Endothelial cell of umbilical vein (primary cell): ENCODE measurements at regions of chr5 and their contacts with region 1.

Region 1: DNA sequence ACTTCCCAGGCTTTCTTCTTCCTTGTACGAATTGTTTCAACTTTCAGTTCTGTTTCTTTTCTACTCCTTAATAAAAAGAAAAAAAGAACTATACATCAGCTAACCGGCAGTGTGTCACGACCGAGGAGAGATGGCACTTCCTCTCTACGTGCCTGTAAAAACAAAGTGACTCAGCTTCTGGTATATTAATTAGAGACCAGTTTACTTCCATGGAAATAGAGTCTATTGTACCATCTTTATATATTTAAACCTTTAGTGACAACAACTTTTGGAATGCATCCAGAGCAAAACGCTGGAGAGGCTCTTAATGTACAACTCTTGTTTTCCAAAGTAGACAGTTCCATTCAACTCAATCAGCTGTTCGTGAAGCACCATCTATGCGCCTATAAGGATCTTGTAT is 94.5 kb upstream of the LIFR start:
- DNase-seq: peak; percentile 92
- H3K4me3 ChIP-seq: peak overlapping the region in 1 of 3 experiments; percentile 28
- H3K27ac ChIP-seq: peak overlapping the region; percentile 44
- H3K4me1 ChIP-seq: peaks cover 12% of the 10 kb centered on the region
- H3K27me3 ChIP-seq: peaks cover 0 to 2% of the 10 kb centered on the region in 2 experiments
- CTCF ChIP-seq: no peak
- POLR2A ChIP-seq: no peak

Region 2: DNA sequence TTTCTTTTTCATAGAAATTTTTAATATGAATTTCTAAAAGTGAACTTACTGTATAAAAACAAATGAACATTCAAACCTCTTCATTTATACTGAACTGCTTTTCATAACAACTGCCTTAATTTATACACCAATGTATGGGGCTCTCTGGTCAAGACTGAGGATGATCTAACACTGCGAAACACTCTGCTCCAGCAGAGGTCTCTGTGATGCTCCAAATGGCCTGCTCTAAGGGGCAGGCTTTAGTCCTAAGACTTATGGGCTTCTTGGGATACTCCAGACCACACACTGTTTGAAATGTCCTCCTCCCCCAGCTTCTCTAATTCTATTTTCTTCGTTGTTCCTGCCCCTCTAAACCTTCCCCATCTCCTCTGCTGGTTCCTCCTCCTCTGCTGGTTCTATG is 153.0 kb before region 1 on chr5:
- CTCF ChIA-PET with region 1: no interaction called
- POLR2A ChIA-PET with region 1: no interaction called
- dilution Hi-C with region 1: no loop called
- intact Hi-C with region 1: no loop called
- DNase-seq: peak; percentile 14
- H3K4me3 ChIP-seq: no peak overlapping the region
- H3K27ac ChIP-seq: no peak overlapping the region
- H3K4me1 ChIP-seq: no peaks in the 10 kb centered on the region
- H3K27me3 ChIP-seq: no peaks in the 10 kb centered on the region
- CTCF ChIP-seq: no peak
- POLR2A ChIP-seq: no peak

Region 3: DNA sequence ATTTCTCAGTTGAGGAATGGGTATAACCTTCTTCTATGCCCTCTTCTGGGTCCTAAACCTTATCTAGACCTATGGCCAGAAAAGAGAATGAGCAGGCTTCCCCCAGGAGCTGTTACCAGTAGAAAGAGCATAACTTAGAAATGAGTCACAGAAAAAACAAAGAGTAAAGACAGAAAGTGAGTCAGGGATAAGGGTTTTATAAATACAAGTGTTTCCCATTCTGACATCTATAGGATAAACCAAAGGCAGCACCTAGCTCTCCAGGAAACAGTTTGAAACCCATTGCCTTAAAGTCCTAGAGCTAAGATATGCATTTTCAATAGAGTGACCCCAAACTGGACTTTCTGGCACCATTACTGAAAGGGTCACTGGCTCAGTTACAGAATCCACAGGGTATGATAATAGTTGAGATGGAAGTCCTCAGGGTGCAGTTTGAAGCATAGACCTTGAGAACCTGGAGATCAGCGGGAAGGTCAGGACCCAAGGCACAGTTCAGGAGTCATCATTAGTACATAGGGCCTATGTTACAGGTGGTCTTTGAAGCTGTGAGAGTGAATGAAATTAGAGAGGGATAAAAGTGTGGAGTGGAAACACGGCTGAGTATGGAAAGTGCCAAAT is 51.8 kb before region 1 on chr5:
- CTCF ChIA-PET with region 1: interaction called, 6 read pairs
- POLR2A ChIA-PET with region 1: no interaction called
- dilution Hi-C with region 1: no loop called
- intact Hi-C with region 1: loop called (anchors 1 kb)
- DNase-seq: peak; percentile 87
- H3K4me3 ChIP-seq: no peak overlapping the region
- H3K27ac ChIP-seq: peak overlapping the region; percentile 66
- H3K4me1 ChIP-seq: peaks cover 59% of the 10 kb centered on the region
- H3K27me3 ChIP-seq: no peaks in the 10 kb centered on the region
- CTCF ChIP-seq: no peak
- POLR2A ChIP-seq: no peak

Region 4: GRCh38 chr5:38765399-38765861 is 114.5 kb after region 1 on chr5:
- CTCF ChIA-PET with region 1: no interaction called
- POLR2A ChIA-PET with region 1: no interaction called
- dilution Hi-C with region 1: no loop called
- intact Hi-C with region 1: no loop called
- DNase-seq: no peak
- H3K4me3 ChIP-seq: no peak overlapping the region
- H3K27ac ChIP-seq: no peak overlapping the region
- H3K4me1 ChIP-seq: no peaks in the 10 kb centered on the region
- H3K27me3 ChIP-seq: peaks cover 4 to 5% of the 10 kb centered on the region in 2 experiments
- CTCF ChIP-seq: no peak
- POLR2A ChIP-seq: no peak

Region 5: GRCh38 chr5:38871790-38872551 is 221.0 kb after region 1 on chr5:
- CTCF ChIA-PET with region 1: no interaction called
- POLR2A ChIA-PET with region 1: no interaction called
- dilution Hi-C with region 1: no loop called
- intact Hi-C with region 1: loop called (anchors 5 kb)
- DNase-seq: peak; percentile 87
- H3K4me3 ChIP-seq: no peak overlapping the region
- H3K27ac ChIP-seq: peak overlapping the region; percentile 43
- H3K4me1 ChIP-seq: peaks cover 13% of the 10 kb centered on the region
- H3K27me3 ChIP-seq: peaks cover 0 to 4% of the 10 kb centered on the region in 2 experiments
- CTCF ChIP-seq: no peak
- POLR2A ChIP-seq: no peak